Heart right ventricle (tissue), 16 donors: ENCODE measurements at regions of chr2 and their contacts with region 1.

Region 1: GRCh38 chr2:10043906-10044601 is 704 bp downstream of the KLF11 start:
- DNase-seq: peak; percentile 99
- ATAC-seq: peak; percentile 73 to 84 (median 78)
- H3K4me3 ChIP-seq: peak overlapping the region; percentile 51 to 89 (median 64)
- H3K27ac ChIP-seq: peak overlapping the region; percentile 93 to 100 (median 98)
- H3K4me1 ChIP-seq: peaks cover 9 to 86% (median 73%) of the 10 kb centered on the region in 9 donors
- H3K27me3 ChIP-seq: no peaks in the 10 kb centered on the region
- CTCF ChIP-seq: no peak

Region 2: DNA sequence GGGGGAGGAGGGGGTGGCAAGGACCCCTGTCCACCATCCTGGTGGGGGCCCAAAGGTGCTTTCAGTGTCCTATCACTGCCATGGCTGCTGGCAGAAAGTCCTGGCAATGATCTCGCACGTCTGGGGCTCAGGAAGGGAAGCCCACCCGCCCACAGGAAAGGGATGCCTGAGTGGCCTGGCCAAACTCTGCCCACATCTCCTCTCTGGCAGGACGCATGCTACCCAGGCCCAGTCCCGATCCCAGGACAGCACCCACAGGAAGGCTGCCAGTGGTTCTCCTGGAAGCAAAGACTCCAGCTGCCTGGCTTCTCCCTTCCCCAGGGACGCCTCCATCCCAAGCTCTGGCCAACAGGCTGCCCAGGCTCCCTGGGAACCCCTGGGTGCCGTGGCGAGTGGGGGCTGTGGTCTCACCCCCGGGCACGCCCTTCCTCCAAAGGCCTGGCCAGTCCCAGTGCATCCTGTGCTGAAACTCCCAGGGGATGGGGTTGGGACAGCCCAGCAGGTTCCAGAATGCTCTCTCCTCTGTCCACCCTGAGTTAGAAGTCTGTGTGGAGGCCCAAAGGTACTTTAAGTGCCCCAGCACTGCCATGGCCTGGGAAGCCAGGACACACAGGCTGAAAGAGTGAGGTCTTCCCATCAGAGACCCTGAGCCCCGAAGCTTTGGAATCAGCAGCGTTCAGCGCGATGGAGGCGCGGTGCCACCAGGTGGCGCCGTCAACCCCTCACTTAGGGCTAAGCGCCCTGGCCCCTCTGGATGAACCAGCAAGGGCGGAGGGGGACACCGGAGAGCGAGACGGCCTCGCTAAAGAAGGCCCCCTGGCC is 230.5 kb before region 1 on chr2:
- intact Hi-C with region 1: loop called in 8 of 10 experiments (anchors 5 to 10 kb)
- DNase-seq: peak; percentile 61 to 76
- ATAC-seq: peak; percentile 79 to 92 (median 86)
- H3K4me3 ChIP-seq: peak overlapping the region in 5 of 10 donors; percentile 3 to 29 (median 25)
- H3K27ac ChIP-seq: no peak overlapping the region
- H3K4me1 ChIP-seq: peaks cover 0 to 16% (median 13%) of the 10 kb centered on the region in 9 donors
- H3K27me3 ChIP-seq: peaks cover 0 to 3% (median 0%) of the 10 kb centered on the region in 7 donors
- CTCF ChIP-seq: peak; percentile 80 to 97 (median 94)

Region 3: DNA sequence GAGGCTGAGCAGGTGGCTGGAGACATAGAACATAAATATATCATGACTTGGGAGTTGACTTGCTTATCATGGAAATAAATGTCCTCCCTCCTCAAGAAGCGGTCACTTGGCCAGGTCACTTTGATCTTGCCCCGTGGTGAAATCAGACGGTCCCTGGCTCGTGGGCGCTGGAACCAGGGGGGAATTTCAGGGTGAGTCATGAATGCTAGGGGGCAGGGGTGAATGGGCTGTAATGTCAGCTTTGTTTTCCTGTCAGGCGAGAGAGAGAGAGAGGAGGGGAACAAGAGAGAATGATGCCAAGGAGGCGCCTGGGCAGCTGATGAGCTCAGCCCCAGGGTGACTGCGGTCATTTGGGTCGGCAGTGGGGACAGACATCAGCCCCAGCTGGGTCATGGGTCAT is 126.2 kb after region 1 on chr2:
- intact Hi-C with region 1: no loop called
- DNase-seq: no peak
- ATAC-seq: peak in 1 of 8 donors; percentile 24
- H3K4me3 ChIP-seq: no peak overlapping the region
- H3K27ac ChIP-seq: no peak overlapping the region
- H3K4me1 ChIP-seq: no peaks in the 10 kb centered on the region
- H3K27me3 ChIP-seq: no peaks in the 10 kb centered on the region
- CTCF ChIP-seq: no peak